ENCODE measurements at regions of chr5 and their contacts with region 1.

Region 1: GRCh38 chr5:168268949-168269943 is 22.2 kb upstream of the WWC1 start:
- DNase-seq: peak; percentile 91
- H3K4me3 ChIP-seq: peak overlapping the region; percentile 21
- H3K27ac ChIP-seq: no peak overlapping the region
- H3K4me1 ChIP-seq: no peaks in the 10 kb centered on the region
- H3K27me3 ChIP-seq: no peaks in the 10 kb centered on the region
- CTCF ChIP-seq: peak; percentile 90

Region 2: DNA sequence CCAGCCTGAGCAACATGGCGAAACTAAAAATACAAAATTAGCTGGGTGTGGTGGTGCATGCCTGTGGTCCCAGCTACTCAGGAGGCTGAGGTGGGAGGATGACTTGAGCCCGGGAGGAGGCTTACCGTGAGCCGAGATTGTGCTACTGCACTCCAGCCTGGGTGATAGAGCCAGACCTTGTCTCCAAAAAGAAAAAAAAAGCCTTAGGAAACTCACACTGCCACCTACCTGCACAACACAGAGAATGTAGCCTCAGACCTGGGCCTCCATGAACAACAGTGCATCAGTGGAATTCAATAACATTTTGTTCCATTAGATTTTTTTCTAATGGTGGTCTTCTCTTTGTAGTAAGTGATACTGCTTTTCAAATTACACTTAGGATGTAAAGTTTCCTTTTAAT is 153.2 kb after region 1 on chr5:
- intact Hi-C with region 1: loop called (anchors 5 kb)
- DNase-seq: no peak
- H3K4me3 ChIP-seq: no peak overlapping the region
- H3K27ac ChIP-seq: no peak overlapping the region
- H3K4me1 ChIP-seq: no peaks in the 10 kb centered on the region
- H3K27me3 ChIP-seq: no peaks in the 10 kb centered on the region
- CTCF ChIP-seq: peak; percentile 22

Region 3: DNA sequence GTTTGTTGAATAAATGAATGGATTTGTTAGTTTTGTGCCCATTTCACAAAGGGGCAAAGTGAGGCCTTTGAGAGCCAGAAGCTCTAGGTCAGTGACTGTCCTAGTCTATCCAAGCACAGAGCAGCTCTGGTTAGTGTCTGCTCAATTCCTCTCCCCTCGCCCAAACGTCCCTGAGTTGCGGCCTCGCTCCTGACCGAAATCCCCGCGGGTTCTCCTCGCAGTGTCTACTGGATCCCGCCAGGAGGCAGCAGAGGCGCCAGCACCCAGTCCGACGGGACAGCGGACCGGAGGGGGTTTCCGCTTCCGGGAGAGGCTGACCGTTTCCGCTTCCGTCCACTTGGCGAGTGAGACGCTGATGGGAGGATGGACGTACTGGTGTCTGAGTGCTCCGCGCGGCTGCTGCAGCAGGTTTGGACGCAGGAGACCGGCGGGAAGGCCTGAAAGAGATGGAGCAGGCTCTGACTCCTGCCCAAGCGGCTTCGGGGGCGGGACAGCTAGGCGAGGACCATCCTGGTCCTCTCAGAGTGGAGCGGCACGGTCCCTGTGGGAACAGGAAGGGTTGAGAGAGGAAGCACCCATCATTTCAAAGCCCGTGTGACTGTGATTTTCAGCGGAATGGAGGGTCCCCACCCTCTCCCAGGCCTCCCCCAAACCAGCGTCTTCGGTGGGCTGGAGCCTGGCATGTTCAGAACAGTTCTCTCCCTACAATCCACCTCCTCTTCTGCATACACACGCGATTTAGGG is 217.1 kb after region 1 on chr5 and contains the start of gene RARS1:
- intact Hi-C with region 1: loop called (anchors 5 kb)
- DNase-seq: peak; percentile 95
- H3K4me3 ChIP-seq: peak within 1 kb of the TSS; percentile 65
- H3K27ac ChIP-seq: peak within 1 kb of the TSS; percentile 53
- H3K4me1 ChIP-seq: no peaks in the 10 kb centered on the region
- H3K27me3 ChIP-seq: no peaks in the 10 kb centered on the region
- CTCF ChIP-seq: peak; percentile 98
- total RNA-seq, gene RARS1: 61.8 to 85.5 TPM

Measured in colonic mucosa (tissue), 4 donors.